ENCODE measurements at regions of chr4 and their contacts with region 1.

Region 1: DNA sequence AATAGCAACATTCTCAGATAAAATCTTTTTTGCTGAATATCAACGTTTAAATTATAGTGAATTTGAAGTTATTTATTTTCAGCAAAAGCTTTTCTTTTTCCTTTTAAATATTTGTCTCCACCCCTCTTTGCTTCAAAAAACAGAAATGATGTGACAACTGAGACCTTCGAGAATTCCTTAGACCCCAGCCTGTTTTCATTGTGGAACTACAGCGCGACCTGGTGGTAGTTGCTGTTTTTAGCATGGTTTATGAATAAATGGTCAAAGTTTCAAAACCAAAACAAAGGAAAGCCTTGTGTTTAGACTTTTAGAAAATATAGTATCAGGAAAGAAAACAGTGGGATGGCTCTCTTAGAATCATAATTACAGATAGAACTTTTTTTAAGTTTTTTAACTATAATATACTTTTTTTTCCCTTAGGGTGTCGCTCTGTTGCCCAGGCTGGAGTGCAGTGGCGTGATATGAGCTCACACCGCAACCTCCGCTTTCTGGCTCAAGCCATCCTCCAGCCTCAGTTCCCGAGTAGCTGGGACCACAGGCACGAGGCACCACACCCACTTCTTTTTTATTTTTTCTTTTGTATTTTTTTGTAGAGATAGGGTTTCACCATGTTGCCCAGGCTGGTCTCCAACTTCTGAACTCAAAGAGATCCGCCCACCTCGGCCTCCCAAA is 26.8 kb upstream of the TMEM184C start:
- DNase-seq: peak; percentile 69
- ATAC-seq: no peak
- H3K4me3 Mint-ChIP-seq: no peak overlapping the region
- H3K27ac Mint-ChIP-seq: no peak overlapping the region
- H3K4me1 Mint-ChIP-seq: no peaks in the 10 kb centered on the region
- H3K27me3 Mint-ChIP-seq: peaks cover 4% of the 10 kb centered on the region

Region 2: GRCh38 chr4:147019061-147019460 is 571.3 kb before region 1 on chr4:
- CTCF ChIA-PET with region 1: interaction called, 4 read pairs
- POLR2A ChIA-PET with region 1: no interaction called
- intact Hi-C with region 1: loop called in 1 of 2 experiments (anchors 2 kb)
- DNase-seq: peak; percentile 71
- ATAC-seq: no peak
- H3K4me3 Mint-ChIP-seq: no peak overlapping the region
- H3K27ac Mint-ChIP-seq: no peak overlapping the region
- H3K4me1 Mint-ChIP-seq: no peaks in the 10 kb centered on the region
- H3K27me3 Mint-ChIP-seq: peaks cover 2% of the 10 kb centered on the region

Region 3: DNA sequence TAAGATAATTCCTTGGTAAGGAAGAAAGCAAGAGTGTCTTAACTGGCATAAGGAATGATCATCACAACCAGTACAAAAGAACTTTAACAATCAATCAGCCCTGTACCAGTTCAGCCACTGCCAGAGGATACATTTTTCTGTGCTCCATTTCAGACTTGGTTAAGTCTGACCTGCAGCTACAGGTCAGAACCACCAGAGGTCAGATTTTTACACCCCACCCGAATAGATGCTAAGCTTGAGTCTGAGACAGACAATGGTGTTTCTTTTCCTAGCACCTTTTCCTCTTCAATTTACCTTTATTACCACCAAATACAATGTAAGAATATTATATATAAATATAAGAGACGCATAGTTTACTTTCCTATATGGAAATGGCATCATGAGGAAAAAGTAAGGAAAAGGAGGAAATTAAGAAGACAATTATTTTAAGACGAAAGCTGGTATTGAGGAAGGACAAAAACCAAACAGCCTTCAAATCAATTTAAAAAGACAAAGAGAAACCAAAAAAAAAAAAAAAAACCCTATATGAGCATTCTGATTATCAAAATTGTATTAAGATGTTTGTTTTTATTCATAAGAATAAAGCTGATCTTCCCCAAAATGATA is 429.4 kb before region 1 on chr4:
- CTCF ChIA-PET with region 1: interaction called, 11 read pairs
- POLR2A ChIA-PET with region 1: no interaction called
- intact Hi-C with region 1: loop called (anchors 1 to 2 kb)
- DNase-seq: peak; percentile 17
- ATAC-seq: no peak
- H3K4me3 Mint-ChIP-seq: no peak overlapping the region
- H3K27ac Mint-ChIP-seq: no peak overlapping the region
- H3K4me1 Mint-ChIP-seq: peaks cover 2% of the 10 kb centered on the region
- H3K27me3 Mint-ChIP-seq: peaks cover 34% of the 10 kb centered on the region

Region 4: DNA sequence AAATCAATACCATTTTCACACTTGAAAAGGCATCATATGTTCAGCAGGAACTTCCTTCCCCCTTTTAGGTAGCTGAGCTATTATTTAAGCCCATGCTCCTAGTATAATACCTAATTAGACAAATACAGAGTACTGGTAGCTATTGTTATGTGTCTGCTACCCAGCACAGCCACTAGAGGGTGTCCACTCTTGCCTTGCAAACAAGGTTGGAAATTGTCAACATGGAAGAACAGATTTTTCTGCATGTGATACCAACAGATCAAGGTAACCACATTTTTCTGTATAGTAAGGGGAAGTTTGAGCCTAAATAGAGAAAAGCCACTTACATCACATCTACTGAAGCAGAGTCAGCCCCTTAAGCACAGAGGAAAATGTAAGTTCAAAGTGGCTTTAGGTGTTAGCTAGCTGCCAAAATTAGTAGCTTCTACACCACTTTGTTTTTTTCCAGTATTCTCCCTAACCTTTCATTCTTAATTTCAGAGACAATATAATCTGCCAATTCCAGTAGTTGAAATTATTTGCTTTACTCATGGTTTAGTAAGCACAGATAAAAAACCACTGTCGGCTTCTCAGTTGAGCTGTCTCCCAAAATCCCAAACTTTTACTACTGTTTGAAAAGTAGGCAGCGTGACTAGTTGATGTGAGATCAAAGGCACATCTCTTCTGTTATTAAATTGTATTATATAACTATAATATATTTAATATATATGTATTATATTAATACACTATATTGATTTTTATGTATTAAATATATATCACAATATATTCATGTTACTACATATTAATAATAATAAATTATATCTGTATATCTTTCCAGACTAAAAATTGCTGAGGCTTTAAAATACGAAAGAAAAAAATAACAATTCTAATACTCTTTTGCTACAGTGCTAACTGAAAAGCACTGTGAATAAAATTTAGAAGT is 71.3 kb before region 1 on chr4:
- CTCF ChIA-PET with region 1: interaction called, 26 read pairs
- POLR2A ChIA-PET with region 1: no interaction called
- intact Hi-C with region 1: loop called (anchors 1 to 2 kb)
- DNase-seq: peak; percentile 70
- ATAC-seq: peak; percentile 69
- H3K4me3 Mint-ChIP-seq: no peak overlapping the region
- H3K27ac Mint-ChIP-seq: no peak overlapping the region
- H3K4me1 Mint-ChIP-seq: no peaks in the 10 kb centered on the region
- H3K27me3 Mint-ChIP-seq: peaks cover 10% of the 10 kb centered on the region

Region 5: GRCh38 chr4:147651563-147651962 is 61.2 kb after region 1 on chr4:
- CTCF ChIA-PET with region 1: no interaction called
- POLR2A ChIA-PET with region 1: no interaction called
- intact Hi-C with region 1: no loop called
- DNase-seq: peak; percentile 14
- ATAC-seq: peak; percentile 80
- H3K4me3 Mint-ChIP-seq: no peak overlapping the region
- H3K27ac Mint-ChIP-seq: no peak overlapping the region
- H3K4me1 Mint-ChIP-seq: peaks cover 22% of the 10 kb centered on the region
- H3K27me3 Mint-ChIP-seq: no peaks in the 10 kb centered on the region

Region 6: DNA sequence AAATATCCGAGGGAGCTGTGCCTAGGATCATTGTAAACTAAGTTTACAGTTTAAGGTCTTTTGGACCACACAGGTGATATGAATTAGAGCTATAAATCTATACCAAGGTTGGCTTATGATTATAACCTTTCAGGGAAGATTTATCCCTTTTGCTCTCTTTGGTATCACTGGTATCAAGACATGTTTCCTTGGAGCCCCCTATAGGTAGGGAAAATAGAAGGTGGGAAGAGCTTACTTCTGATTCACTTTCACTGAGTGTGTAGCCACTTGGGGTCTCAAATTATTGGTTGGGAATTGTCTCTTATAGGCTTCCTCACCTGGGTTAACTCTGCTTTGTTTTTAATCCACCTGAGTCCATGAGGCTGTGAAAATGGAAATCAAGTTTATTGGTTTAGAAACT is 1113.9 kb after region 1 on chr4:
- CTCF ChIA-PET with region 1: no interaction called
- POLR2A ChIA-PET with region 1: no interaction called
- intact Hi-C with region 1: no loop called
- DNase-seq: no peak
- ATAC-seq: no peak
- H3K4me3 Mint-ChIP-seq: no peak overlapping the region
- H3K27ac Mint-ChIP-seq: no peak overlapping the region
- H3K4me1 Mint-ChIP-seq: no peaks in the 10 kb centered on the region
- H3K27me3 Mint-ChIP-seq: no peaks in the 10 kb centered on the region